ENCODE measurements at regions of chr20 and their contacts with region 1.

Region 1: GRCh38 chr20:45293041-45294002 is 13.3 kb upstream of the RBPJL start:
- DNase-seq: peak; percentile 76
- H3K4me3 ChIP-seq: peak overlapping the region; percentile 33 to 51 (median 47)
- H3K27ac ChIP-seq: peak overlapping the region; percentile 37
- H3K4me1 ChIP-seq: peaks cover 9% of the 10 kb centered on the region
- H3K27me3 ChIP-seq: peaks cover 0 to 8% of the 10 kb centered on the region in 2 experiments
- CTCF ChIP-seq: peak; percentile 95 to 99
- POLR2A ChIP-seq: no peak

Region 2: DNA sequence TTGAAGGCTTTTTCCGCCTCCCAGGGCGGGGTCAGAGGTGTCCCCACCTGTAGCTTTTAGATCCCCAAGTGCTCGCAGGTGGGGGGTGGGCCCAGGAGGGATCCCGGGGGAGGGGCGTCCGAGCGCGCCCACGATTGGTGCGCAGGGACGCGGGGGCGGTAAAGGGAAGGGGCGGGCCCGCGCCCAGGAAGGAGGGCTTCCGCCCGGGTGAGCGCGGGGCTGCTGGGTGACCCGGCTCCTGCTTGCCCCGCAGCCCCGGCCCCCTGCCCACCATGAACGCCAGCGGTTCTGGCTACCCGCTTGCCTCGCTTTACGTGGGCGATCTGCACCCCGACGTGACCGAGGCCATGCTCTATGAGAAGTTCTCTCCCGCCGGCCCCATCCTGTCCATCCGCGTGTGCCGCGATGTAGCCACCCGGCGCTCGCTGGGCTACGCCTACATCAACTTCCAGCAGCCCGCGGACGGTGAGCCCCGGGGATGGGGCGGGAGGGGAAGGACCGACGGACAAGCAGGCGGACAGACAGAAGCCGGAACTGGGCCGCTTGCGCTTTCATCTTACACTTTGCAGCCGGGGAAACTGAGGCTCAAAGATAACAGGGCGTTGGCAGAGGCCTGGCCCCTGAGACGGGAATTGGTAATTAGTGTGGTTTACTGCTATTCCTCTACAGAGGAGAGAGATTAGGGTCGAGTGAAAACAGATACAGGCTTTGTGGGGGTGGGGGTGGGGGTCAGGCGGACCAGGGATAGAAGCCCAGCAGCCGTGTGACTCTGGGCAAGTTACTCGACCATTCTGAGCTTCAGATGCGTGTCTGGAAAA is 383.2 kb before region 1 on chr20 and contains the start of gene PABPC1L:
- CTCF ChIA-PET with region 1: no interaction called
- POLR2A ChIA-PET with region 1: no interaction called
- dilution Hi-C with region 1: no loop called
- intact Hi-C with region 1: loop called (anchors 5 kb)
- DNase-seq: no peak
- H3K4me3 ChIP-seq: peak within 1 kb of the TSS; percentile 43 to 62 (median 51)
- H3K27ac ChIP-seq: no peak within 1 kb of the TSS
- H3K4me1 ChIP-seq: peaks cover 12% of the 10 kb centered on the region
- H3K27me3 ChIP-seq: no peaks in the 10 kb centered on the region
- CTCF ChIP-seq: no peak
- POLR2A ChIP-seq: peak; percentile 47
- total RNA-seq, gene PABPC1L: 7.5 and 7.8 TPM in 2 replicates

Region 3: DNA sequence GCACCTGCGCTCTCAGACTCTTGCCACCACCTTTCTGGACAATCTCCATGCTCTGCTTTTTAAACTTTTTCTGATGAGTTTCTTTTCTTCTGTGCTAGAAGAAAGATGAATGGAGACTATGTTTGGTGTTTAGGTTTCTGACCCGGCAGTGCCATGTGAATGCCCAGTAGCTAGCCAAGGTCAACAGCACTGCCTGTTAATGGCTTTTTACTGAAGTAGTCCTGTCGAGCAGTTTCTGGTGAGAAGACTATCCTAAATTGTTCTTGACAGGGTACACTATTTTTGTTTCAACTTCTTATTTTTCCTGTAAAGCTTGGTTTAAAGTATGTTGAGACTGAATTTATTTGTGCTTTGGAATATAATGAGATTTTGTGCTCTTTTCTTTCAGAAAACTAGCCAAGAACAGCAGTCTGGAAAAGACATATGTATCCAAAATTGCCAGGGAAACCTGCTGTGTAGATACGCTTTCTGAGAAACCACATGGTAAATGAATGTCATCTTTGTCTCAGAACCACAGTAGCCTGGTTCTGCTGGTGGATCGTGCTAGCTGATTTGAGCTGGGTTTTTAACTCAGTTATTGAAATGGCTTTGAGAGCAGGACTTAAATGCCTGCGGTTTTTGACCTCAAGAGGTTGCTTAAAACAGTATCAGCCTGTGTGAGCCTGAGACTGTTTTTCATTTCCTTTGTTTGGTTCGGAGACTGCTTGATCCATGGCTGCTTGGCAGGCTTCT is 240.5 kb before region 1 on chr20:
- CTCF ChIA-PET with region 1: interaction called, 15 read pairs
- POLR2A ChIA-PET with region 1: no interaction called
- dilution Hi-C with region 1: no loop called
- intact Hi-C with region 1: no loop called
- DNase-seq: no peak
- H3K4me3 ChIP-seq: no peak overlapping the region
- H3K27ac ChIP-seq: no peak overlapping the region
- H3K4me1 ChIP-seq: peaks cover 12% of the 10 kb centered on the region
- H3K27me3 ChIP-seq: no peaks in the 10 kb centered on the region
- CTCF ChIP-seq: no peak
- POLR2A ChIP-seq: no peak

Region 4: GRCh38 chr20:45111799-45112471 is 181.4 kb before region 1 on chr20:
- CTCF ChIA-PET with region 1: interaction called, 20 read pairs
- POLR2A ChIA-PET with region 1: no interaction called
- dilution Hi-C with region 1: no loop called
- intact Hi-C with region 1: loop called (anchors 5 kb)
- DNase-seq: peak; percentile 26
- H3K4me3 ChIP-seq: no peak overlapping the region
- H3K27ac ChIP-seq: no peak overlapping the region
- H3K4me1 ChIP-seq: no peaks in the 10 kb centered on the region
- H3K27me3 ChIP-seq: peaks cover 0 to 4% of the 10 kb centered on the region in 2 experiments
- CTCF ChIP-seq: peak; percentile 47 to 51
- POLR2A ChIP-seq: no peak

Region 5: DNA sequence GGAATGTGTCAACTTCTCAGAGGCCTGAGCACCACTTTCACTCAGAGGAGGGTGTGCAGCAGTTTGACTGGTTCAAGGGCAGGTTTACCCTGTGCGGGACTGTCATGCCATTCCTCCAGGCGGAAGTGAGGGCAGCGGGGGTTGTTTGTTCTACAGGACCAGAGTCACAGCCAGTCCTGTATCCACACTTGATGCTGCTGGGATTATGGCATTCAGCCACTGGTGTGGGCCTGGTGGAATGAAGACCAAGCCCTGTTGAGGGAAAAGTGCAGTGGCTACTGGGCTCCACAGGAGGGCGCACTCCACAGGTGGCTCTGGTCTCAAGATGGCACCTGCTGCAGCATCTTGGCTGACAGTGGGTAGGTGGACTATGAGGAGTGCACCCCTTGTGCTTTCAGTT is 57.3 kb before region 1 on chr20:
- CTCF ChIA-PET with region 1: interaction called, 11 read pairs
- POLR2A ChIA-PET with region 1: no interaction called
- dilution Hi-C with region 1: no loop called
- intact Hi-C with region 1: loop called (anchors 5 kb)
- DNase-seq: no peak
- H3K4me3 ChIP-seq: no peak overlapping the region
- H3K27ac ChIP-seq: no peak overlapping the region
- H3K4me1 ChIP-seq: no peaks in the 10 kb centered on the region
- H3K27me3 ChIP-seq: peaks cover 6 to 10% of the 10 kb centered on the region in 2 experiments
- CTCF ChIP-seq: peak; percentile 51 to 56
- POLR2A ChIP-seq: no peak

Region 6: DNA sequence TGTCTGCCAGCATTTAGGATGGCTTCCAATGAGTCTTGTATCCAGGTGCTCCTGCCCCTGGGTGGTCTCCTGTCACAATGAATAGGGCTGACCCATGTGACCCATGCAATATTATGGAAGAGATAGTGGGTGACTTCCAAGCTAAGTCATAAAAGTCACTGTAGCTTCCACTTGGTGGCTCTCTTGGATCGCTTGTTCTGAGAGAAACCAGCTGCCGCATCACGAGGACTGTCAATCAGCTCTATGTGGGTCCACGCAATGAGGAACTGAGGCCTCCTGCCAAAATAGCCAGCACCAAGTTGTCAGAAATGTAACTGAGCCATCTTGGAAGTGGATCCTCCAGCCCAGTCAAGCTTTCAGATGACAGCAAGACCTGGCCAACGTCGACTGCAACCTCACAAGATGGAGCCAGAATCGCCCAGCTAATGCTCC is 29.6 kb after region 1 on chr20:
- CTCF ChIA-PET with region 1: interaction called, 12 read pairs
- POLR2A ChIA-PET with region 1: no interaction called
- dilution Hi-C with region 1: no loop called
- intact Hi-C with region 1: no loop called
- DNase-seq: peak; percentile 41
- H3K4me3 ChIP-seq: no peak overlapping the region
- H3K27ac ChIP-seq: no peak overlapping the region
- H3K4me1 ChIP-seq: no peaks in the 10 kb centered on the region
- H3K27me3 ChIP-seq: peaks cover 2% of the 10 kb centered on the region in 2 experiments
- CTCF ChIP-seq: peak in 1 of 2 donors; percentile 15
- POLR2A ChIP-seq: no peak